WTC11 (cell line): ENCODE measurements at regions of chr1 and their contacts with region 1.

Region 1: GRCh38 chr1:33633019-33633801 is 160.8 kb downstream of the ZSCAN20 start:
- DNase-seq: peak; percentile 96
- ATAC-seq: peak; percentile 76
- H3K4me3 Mint-ChIP-seq: no peak overlapping the region
- H3K27ac Mint-ChIP-seq: no peak overlapping the region
- H3K4me1 Mint-ChIP-seq: peaks cover 31% of the 10 kb centered on the region
- H3K27me3 Mint-ChIP-seq: peaks cover 20% of the 10 kb centered on the region
- CTCF ChIP-seq: peak; percentile 85

Region 2: DNA sequence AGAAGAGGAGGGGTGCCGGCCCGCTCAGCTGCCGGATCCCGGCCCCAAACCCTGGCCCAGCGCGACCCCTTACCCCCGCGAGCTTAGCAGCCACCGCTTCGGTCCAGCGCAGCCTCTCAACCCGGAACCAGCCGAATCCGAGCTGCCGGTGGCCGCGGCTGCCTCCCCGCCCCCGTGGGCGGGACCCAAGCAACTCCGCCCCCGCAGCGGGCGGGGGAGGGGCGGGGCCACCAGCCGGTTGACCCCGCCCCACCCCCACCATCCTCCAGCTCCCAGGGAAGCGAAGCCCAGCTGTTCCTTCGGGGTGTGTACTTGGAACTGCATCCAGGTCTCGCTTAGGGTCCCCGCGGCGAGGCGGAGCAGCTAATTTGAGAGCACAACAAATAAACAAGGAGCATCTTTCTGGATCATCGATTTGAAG is 451.3 kb before region 1 on chr1 and contains the start of gene TRIM62:
- CTCF ChIA-PET with region 1: interaction called, 10 read pairs
- POLR2A ChIA-PET with region 1: no interaction called
- DNase-seq: peak; percentile 77
- ATAC-seq: peak; percentile 60
- H3K4me3 Mint-ChIP-seq: peak within 1 kb of the TSS; percentile 79
- H3K27ac Mint-ChIP-seq: peak within 1 kb of the TSS; percentile 60; the same call in 1 of the 2 replicates
- H3K4me1 Mint-ChIP-seq: peaks cover 24% of the 10 kb centered on the region
- H3K27me3 Mint-ChIP-seq: peaks cover 8% of the 10 kb centered on the region
- CTCF ChIP-seq: no peak
- total RNA-seq, gene TRIM62: 10.7 to 13.6 TPM (median 11.0 TPM) in 3 replicates

Region 3: DNA sequence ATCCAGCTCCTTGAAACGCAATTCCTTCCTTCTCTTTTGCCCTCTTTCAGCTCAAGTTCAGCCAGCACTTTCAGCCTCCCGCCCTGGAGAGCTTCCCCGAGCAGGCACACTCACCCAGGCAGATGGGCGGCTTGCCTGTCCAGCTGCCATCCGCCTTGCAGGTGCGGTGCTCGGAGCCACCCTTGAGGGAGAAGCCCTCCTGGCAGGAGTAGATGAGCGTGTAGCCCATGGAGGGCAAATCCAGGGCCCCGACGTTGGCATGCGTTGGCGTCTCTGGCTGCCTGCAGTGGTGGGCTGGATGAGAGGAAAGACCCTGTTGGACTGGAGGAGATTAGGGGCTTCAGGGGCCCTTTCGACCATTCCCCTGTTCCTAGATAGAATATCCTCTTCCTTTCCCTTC is 100.3 kb before region 1 on chr1:
- CTCF ChIA-PET with region 1: no interaction called
- POLR2A ChIA-PET with region 1: no interaction called
- DNase-seq: no peak
- ATAC-seq: no peak
- H3K4me3 Mint-ChIP-seq: no peak overlapping the region
- H3K27ac Mint-ChIP-seq: no peak overlapping the region
- H3K4me1 Mint-ChIP-seq: no peaks in the 10 kb centered on the region
- H3K27me3 Mint-ChIP-seq: no peaks in the 10 kb centered on the region
- CTCF ChIP-seq: no peak

Region 4: GRCh38 chr1:33616773-33617172 is 16.4 kb before region 1 on chr1:
- CTCF ChIA-PET with region 1: interaction called, 15 read pairs
- POLR2A ChIA-PET with region 1: no interaction called
- DNase-seq: no peak
- ATAC-seq: no peak
- H3K4me3 Mint-ChIP-seq: no peak overlapping the region
- H3K27ac Mint-ChIP-seq: no peak overlapping the region
- H3K4me1 Mint-ChIP-seq: no peaks in the 10 kb centered on the region
- H3K27me3 Mint-ChIP-seq: peaks cover 5% of the 10 kb centered on the region
- CTCF ChIP-seq: no peak

Region 5: GRCh38 chr1:33706634-33707255 is 73.5 kb after region 1 on chr1:
- CTCF ChIA-PET with region 1: no interaction called
- POLR2A ChIA-PET with region 1: no interaction called
- DNase-seq: no peak
- ATAC-seq: no peak
- H3K4me3 Mint-ChIP-seq: no peak overlapping the region
- H3K27ac Mint-ChIP-seq: no peak overlapping the region
- H3K4me1 Mint-ChIP-seq: no peaks in the 10 kb centered on the region
- H3K27me3 Mint-ChIP-seq: no peaks in the 10 kb centered on the region
- CTCF ChIP-seq: no peak

Region 6: DNA sequence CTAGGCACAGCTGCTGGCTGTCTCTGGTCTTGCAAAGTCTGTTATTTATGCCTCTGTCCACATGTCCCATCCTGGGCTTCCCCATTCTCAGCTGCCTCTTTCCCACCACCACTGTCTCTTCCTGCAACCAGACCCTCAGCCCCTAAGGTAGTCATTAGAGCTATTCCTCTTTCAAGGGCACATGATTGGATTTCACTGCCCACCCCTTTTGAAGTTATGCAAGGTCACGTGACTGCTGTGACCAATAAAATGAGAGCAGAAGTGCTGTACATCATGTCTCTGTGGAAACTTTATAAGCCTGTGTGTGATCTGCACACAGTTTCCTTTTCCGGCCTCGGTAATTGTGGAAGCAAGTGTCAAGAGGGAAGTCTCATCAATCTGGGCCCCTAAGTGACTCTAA is 94.1 kb after region 1 on chr1:
- CTCF ChIA-PET with region 1: interaction called, 10 read pairs
- POLR2A ChIA-PET with region 1: no interaction called
- DNase-seq: no peak
- ATAC-seq: no peak
- H3K4me3 Mint-ChIP-seq: no peak overlapping the region
- H3K27ac Mint-ChIP-seq: no peak overlapping the region
- H3K4me1 Mint-ChIP-seq: no peaks in the 10 kb centered on the region
- H3K27me3 Mint-ChIP-seq: no peaks in the 10 kb centered on the region
- CTCF ChIP-seq: no peak

Region 7: DNA sequence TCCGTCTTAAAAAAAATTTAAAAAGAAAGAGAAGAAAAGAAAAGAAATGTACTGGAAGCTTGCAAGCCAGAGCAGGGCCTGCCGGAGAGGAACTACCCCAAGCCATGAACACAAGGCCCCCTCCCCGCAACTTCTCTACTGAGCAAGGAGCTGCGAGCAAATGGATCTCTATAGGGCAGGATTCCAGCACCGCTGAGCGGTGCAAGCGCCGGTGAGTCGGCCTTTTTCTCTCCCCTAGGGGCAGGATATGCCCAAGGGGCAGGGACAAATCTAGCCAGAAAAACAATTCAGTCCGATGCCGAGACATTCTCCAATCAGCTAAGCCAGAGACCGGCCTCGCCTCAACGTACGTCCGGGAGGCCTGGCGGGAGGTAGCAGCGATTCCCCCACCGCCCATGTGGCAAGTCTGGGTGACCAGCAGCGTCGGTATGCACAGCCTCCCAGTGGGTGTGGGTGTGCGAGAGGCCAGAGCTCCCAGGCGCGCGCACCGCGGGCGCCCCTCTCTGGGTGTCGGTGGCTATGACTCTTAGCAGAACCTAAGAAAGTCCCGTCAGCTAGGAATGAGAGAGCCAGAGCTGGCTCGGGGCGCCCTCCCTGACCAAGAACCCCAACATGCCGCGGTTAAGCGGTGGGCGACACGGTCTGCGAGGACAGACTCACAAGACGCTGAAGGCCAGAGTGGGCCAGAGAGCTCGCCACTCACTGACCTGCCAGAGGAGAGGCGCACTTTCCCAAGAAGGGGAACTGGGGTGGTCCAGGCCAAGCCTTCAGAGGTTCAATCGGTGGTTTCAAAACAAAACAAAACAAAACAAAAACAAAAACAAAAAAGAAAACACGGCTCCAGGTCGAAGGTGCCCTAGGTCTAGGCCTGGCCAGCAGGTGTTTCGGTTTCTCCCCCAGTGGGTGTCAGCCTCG is 529.9 kb after region 1 on chr1:
- CTCF ChIA-PET with region 1: interaction called, 20 read pairs
- POLR2A ChIA-PET with region 1: no interaction called
- DNase-seq: peak; percentile 84
- ATAC-seq: peak; percentile 56
- H3K4me3 Mint-ChIP-seq: peak overlapping the region; percentile 93
- H3K27ac Mint-ChIP-seq: peak overlapping the region; percentile 85
- H3K4me1 Mint-ChIP-seq: peaks cover 38% of the 10 kb centered on the region
- H3K27me3 Mint-ChIP-seq: no peaks in the 10 kb centered on the region; the same call in 1 of the 2 replicates
- CTCF ChIP-seq: peak; percentile 42